Spleen (tissue), 13 donors: ENCODE measurements at regions of chr6 and their contacts with region 1.

Region 1: GRCh38 chr6:131532580-131533039 is 40.4 kb upstream of the ARG1 start:
- DNase-seq: no peak
- H3K4me3 ChIP-seq: no peak overlapping the region
- H3K27ac ChIP-seq: no peak overlapping the region
- H3K4me1 ChIP-seq: peaks cover 0 to 9% (median 0%) of the 10 kb centered on the region in 6 donors
- H3K27me3 ChIP-seq: no peaks in the 10 kb centered on the region
- CTCF ChIP-seq: no peak
- POLR2A ChIP-seq: no peak

Region 2: DNA sequence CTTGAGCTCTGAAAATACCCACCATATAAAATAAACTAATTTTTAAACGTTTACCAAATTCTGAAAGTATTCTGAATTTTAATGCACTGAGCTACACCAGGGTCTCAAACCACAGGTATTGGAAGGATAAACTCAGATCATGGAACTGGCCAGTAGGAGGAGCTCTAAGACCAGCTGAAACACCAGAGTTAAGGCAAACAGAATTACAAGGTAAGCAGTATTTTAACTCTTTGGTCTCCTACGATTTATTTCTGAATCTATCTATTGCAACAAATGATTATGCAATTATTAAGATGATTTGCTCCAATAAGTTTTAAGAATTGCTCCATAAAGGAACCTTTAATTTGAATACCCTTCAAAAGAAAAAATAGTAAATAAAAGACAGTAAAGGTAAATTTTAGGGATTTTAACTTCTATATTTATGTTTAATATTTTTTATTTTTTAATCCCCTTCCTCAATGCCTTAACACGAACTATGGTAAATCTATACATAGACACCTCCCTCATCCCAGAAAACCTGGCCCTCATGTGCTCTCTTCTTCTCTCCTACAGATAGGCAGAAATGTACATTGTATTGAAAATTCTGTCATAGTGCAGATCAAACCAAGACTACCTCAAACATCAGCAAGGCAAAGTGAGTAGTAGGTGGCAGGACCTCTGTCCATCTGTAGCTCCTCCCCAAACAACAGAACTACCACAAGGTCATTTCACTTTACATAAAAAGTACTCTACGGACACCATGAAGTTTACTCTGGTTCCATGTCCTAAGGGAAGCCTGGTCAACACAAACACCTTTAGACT is 647.0 kb before region 1 on chr6:
- intact Hi-C with region 1: loop called (anchors 5 kb)
- DNase-seq: no peak
- H3K4me3 ChIP-seq: no peak overlapping the region
- H3K27ac ChIP-seq: no peak overlapping the region
- H3K4me1 ChIP-seq: no peaks in the 10 kb centered on the region
- H3K27me3 ChIP-seq: no peaks in the 10 kb centered on the region
- CTCF ChIP-seq: peak in 10 of 11 experiments; percentile 64 to 94 (median 84)
- POLR2A ChIP-seq: no peak

Region 3: DNA sequence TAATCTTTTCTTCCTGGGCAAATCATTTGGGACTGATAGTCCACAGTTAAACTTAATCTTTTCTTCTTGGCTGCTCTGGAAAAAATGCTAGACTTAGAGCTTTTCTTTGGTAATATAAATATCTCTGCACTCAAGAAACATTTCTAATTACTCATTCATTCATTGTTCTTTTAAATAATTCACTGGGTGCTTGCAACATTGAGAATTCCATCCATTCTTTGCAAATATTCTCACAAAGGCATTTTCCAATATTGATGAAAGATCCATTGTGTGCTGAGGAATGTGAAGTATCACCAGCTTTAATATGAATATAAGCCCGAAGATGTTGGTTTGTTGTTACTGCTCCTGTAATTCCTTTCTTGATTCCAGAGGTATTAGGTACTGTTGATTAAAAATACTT is 358.9 kb before region 1 on chr6:
- intact Hi-C with region 1: loop called (anchors 10 kb)
- DNase-seq: no peak
- H3K4me3 ChIP-seq: no peak overlapping the region
- H3K27ac ChIP-seq: no peak overlapping the region
- H3K4me1 ChIP-seq: no peaks in the 10 kb centered on the region
- H3K27me3 ChIP-seq: no peaks in the 10 kb centered on the region
- CTCF ChIP-seq: no peak
- POLR2A ChIP-seq: no peak

Region 4: GRCh38 chr6:131387562-131388447 is 144.8 kb before region 1 on chr6:
- intact Hi-C with region 1: no loop called
- DNase-seq: no peak
- H3K4me3 ChIP-seq: no peak overlapping the region
- H3K27ac ChIP-seq: no peak overlapping the region
- H3K4me1 ChIP-seq: peaks cover 0 to 15% (median 4%) of the 10 kb centered on the region in 6 donors
- H3K27me3 ChIP-seq: no peaks in the 10 kb centered on the region
- CTCF ChIP-seq: no peak
- POLR2A ChIP-seq: no peak

Region 5: GRCh38 chr6:131877999-131878789 is 345.6 kb after region 1 on chr6:
- intact Hi-C with region 1: no loop called
- DNase-seq: no peak
- H3K4me3 ChIP-seq: no peak overlapping the region
- H3K27ac ChIP-seq: no peak overlapping the region
- H3K4me1 ChIP-seq: no peaks in the 10 kb centered on the region
- H3K27me3 ChIP-seq: no peaks in the 10 kb centered on the region
- CTCF ChIP-seq: no peak
- POLR2A ChIP-seq: no peak